HepG2 (cell line): ENCODE measurements at regions of chr5 and their contacts with region 1.

Region 1: GRCh38 chr5:163437309-163438182 is at the start of gene CCNG1:
- DNase-seq: peak; percentile 97
- ATAC-seq: peak; percentile 96
- H3K4me3 ChIP-seq: peak within 1 kb of the TSS; percentile 89 to 95 (median 91)
- H3K27ac ChIP-seq: peak within 1 kb of the TSS; percentile 98
- H3K4me1 ChIP-seq: peaks cover 56% of the 10 kb centered on the region
- H3K27me3 ChIP-seq: no peaks in the 10 kb centered on the region; a peak in 1 of 5 replicates
- CTCF ChIP-seq: 0 out of 2 replicates have a peak, but pooled peaks have one; percentile 3
- EP300 ChIP-seq: peak; percentile 59 to 67; a peak in 2 of 4 replicates
- POLR2A ChIP-seq: peak; percentile 95 to 97
- RAD21 ChIP-seq: peak; percentile 20; the same call in 1 of the 2 replicates
- total RNA-seq, gene CCNG1: 353 and 516 TPM in 2 replicates

Region 2: DNA sequence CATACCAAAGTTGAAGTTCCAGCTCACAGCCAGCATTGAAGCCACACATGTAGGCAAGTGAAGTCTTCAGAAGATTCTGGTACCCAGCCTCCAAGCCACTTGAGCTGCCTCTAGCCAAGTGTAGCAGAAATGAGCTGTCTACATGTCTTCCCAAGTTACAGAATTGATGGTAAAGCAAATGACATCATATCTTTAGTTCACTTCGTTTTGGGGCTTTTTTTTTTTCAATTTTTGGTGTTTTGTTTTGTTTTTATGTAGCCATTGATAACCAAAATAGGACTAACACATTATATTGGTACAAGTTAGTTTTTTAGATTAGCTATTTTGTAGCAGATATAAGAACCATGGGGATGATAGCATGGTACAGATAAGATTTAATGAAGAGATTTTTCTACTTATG is 15.9 kb before region 1 on chr5:
- CTCF ChIA-PET with region 1: no interaction called
- POLR2A ChIA-PET with region 1: interaction called, 4 read pairs
- in situ Hi-C with region 1: no loop called
- intact Hi-C with region 1: loop called (anchors 2 kb)
- DNase-seq: no peak
- ATAC-seq: no peak
- H3K4me3 ChIP-seq: no peak overlapping the region
- H3K27ac ChIP-seq: no peak overlapping the region
- H3K4me1 ChIP-seq: peaks cover 13% of the 10 kb centered on the region
- H3K27me3 ChIP-seq: no peaks in the 10 kb centered on the region
- CTCF ChIP-seq: no peak
- EP300 ChIP-seq: no peak
- POLR2A ChIP-seq: no peak
- RAD21 ChIP-seq: no peak

Region 3: DNA sequence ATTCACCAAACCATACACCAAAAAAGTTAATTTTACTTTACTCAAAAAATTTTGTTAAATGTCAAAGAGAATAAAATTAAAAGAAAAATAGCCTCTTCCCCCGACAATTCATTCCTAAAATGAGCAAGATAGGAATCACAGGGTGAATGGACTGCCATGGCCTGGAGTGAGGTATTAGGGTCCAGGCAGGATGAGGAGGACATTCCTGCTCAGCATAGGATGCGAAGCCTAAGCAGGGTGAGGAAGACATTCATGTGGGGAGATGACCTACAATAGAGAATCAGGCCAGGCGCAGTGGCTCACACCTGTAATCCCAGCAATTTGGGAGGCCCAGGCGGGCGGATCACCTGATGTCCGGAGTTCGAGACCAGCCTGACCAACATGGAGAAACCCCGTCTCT is 13.9 kb after region 1 on chr5:
- CTCF ChIA-PET with region 1: no interaction called
- POLR2A ChIA-PET with region 1: interaction called, 182 read pairs
- in situ Hi-C with region 1: no loop called
- intact Hi-C with region 1: no loop called
- DNase-seq: no peak
- ATAC-seq: peak; percentile 51
- H3K4me3 ChIP-seq: no peak overlapping the region
- H3K27ac ChIP-seq: no peak overlapping the region
- H3K4me1 ChIP-seq: no peaks in the 10 kb centered on the region
- H3K27me3 ChIP-seq: no peaks in the 10 kb centered on the region
- CTCF ChIP-seq: no peak
- EP300 ChIP-seq: no peak
- POLR2A ChIP-seq: no peak
- RAD21 ChIP-seq: no peak

Region 4: GRCh38 chr5:163459922-163460766 is 22.6 kb after region 1 on chr5 and contains the starts of genes HMMR and NUDCD2:
- CTCF ChIA-PET with region 1: no interaction called
- POLR2A ChIA-PET with region 1: interaction called, 182 read pairs
- in situ Hi-C with region 1: no loop called
- intact Hi-C with region 1: loop called (anchors 1 kb)
- DNase-seq: peak; percentile 98
- ATAC-seq: peak; percentile 90
- H3K4me3 ChIP-seq: peak within 1 kb of the TSS; percentile 73 to 88 (median 86)
- H3K27ac ChIP-seq: peak within 1 kb of the TSS; percentile 100
- H3K4me1 ChIP-seq: peaks cover 32% of the 10 kb centered on the region
- H3K27me3 ChIP-seq: peaks cover 0 to 4% of the 10 kb centered on the region in 2 experiments; a peak in 1 of 5 replicates
- CTCF ChIP-seq: no peak; the same call in 1 of the 2 replicates
- EP300 ChIP-seq: peak in 1 of 2 experiments; percentile 39; a peak in 1 of 4 replicates
- POLR2A ChIP-seq: peak; percentile 93 to 95
- RAD21 ChIP-seq: peak; percentile 59; the same call in 1 of the 2 replicates
- total RNA-seq, gene HMMR: 48.3 and 82.7 TPM in 2 replicates
- total RNA-seq, gene NUDCD2: 39.2 and 40.9 TPM in 2 replicates

Region 5: GRCh38 chr5:163505368-163506094 is 68.0 kb after region 1 on chr5 and contains the start of gene MAT2B:
- CTCF ChIA-PET with region 1: no interaction called
- POLR2A ChIA-PET with region 1: interaction called, 3 read pairs
- in situ Hi-C with region 1: no loop called
- intact Hi-C with region 1: loop called (anchors 1 kb)
- DNase-seq: peak; percentile 87
- ATAC-seq: peak; percentile 96
- H3K4me3 ChIP-seq: peak within 1 kb of the TSS; percentile 64 to 99 (median 74)
- H3K27ac ChIP-seq: peak within 1 kb of the TSS; percentile 92
- H3K4me1 ChIP-seq: peaks cover 40% of the 10 kb centered on the region
- H3K27me3 ChIP-seq: no peaks in the 10 kb centered on the region; a peak in 1 of 5 replicates
- CTCF ChIP-seq: peak; percentile 81
- EP300 ChIP-seq: no peak
- POLR2A ChIP-seq: peak; percentile 87 to 89
- RAD21 ChIP-seq: 0 out of 2 replicates have a peak, but pooled peaks have one; percentile 31
- total RNA-seq, gene MAT2B: 37.1 and 62.6 TPM in 2 replicates